ENCODE measurements at regions of chr3 and their contacts with region 1.

Region 1: DNA sequence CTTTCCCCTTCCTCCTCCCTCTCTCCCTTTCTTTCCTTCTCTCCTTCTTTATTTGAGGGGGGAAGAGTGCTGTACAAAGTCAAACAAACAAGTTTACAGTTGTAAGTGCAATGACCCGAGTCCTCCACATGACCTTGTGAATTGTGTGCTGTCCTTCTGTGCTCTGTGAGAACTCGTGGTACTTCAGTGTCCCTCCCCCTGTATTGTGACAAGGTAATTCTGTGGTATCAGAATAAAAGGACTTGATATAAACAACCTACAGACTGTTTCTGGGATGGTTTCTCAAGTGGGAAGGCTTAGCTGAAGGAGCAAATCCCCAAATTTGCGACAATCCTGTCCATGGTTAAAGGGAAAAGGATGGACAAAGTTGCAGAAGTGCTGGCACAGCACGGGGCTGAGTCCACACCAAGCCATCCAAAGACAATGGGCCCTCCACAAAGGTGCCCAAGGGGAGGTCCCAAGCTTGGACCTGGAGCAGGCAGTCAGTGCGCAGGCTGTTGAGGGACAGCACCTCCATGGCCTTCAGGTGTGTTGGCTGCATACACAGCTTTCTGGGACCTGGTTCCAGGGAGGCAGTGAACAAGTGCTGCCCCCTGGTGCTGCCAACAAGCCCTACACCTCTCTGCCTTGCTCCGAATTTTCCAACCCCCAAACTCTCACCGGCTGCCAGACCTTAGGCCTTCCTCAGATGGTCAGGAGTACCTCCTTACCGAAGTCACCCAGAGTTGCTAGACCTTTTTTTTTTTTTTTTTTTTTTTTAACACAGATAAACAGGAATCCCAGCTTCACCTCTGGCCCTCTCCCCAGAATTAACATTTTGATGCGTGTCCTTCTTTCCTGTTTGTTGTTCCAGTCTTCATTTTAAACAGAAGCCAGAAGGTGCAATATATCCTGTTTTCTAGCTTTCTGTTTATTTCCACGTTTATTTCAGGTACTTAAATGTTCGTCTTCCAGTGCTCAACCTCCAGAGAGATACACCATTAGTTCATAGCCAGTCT is 2.6 kb upstream of the APEH start:
- DNase-seq: peak; percentile 52
- H3K4me3 ChIP-seq: no peak overlapping the region
- H3K27ac ChIP-seq: no peak overlapping the region
- H3K4me1 ChIP-seq: peaks cover 33% of the 10 kb centered on the region
- H3K27me3 ChIP-seq: no peaks in the 10 kb centered on the region
- CTCF ChIP-seq: peak; percentile 83

Region 2: GRCh38 chr3:49500732-49501609 is 170.6 kb before region 1 on chr3:
- intact Hi-C with region 1: no loop called
- DNase-seq: peak; percentile 40
- H3K4me3 ChIP-seq: peak overlapping the region; percentile 23
- H3K27ac ChIP-seq: peak overlapping the region; percentile 86
- H3K4me1 ChIP-seq: peaks cover 48% of the 10 kb centered on the region
- H3K27me3 ChIP-seq: no peaks in the 10 kb centered on the region
- CTCF ChIP-seq: no peak

Region 3: DNA sequence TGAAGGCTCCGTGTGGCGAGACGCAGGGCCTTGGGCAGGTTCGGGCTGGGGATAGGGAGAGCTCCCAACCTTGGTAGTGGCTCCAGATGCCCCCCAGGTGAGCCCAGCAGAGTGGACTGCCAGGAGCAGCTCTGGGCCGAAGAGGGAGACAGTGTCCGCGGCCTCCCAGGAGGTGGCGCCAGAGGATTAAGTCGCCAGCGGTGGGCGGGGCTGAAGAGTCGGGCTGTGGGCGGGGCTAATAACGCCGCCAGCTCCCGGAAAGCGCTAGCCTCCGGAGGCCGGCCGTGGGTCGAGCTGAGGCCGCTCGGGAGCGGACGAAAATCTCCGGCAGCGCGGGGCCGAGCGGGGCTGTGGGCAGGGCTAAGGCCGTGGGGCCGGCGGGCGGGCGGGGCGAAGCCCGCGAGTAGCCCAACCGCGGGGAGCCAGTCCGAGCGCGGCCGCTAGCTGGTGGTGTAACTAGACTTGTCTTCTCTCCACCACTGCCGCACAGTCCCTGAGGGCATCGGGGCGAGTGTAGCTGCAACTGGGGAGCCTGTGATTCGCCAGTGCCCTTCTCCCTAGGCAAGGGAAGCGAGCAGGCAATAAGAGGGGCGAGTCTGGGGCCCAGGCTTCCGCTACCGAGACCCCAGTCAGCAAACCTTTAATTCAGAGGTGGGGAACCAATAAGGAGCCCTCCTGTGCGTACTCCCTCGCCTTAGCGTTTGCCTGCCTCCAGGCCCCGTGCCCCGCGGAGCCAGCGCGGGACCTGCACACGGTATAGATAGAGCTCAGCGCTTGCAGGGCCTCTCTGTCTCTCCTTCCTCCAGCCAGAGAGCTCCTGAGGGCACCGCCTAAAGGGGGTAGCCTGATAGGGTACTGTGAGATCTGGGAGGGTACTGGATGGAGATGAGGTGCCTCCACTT is 131.7 kb before region 1 on chr3:
- intact Hi-C with region 1: loop called (anchors 2 kb)
- DNase-seq: peak; percentile 93
- H3K4me3 ChIP-seq: peak overlapping the region; percentile 76
- H3K27ac ChIP-seq: peak overlapping the region; percentile 89
- H3K4me1 ChIP-seq: peaks cover 12% of the 10 kb centered on the region
- H3K27me3 ChIP-seq: peaks cover 15% of the 10 kb centered on the region
- CTCF ChIP-seq: peak; percentile 95

Region 4: GRCh38 chr3:49582177-49582576 is 89.4 kb before region 1 on chr3:
- intact Hi-C with region 1: no loop called
- DNase-seq: no peak
- H3K4me3 ChIP-seq: no peak overlapping the region
- H3K27ac ChIP-seq: no peak overlapping the region
- H3K4me1 ChIP-seq: no peaks in the 10 kb centered on the region
- H3K27me3 ChIP-seq: no peaks in the 10 kb centered on the region
- CTCF ChIP-seq: no peak

Region 5: GRCh38 chr3:49785565-49786240 is 114.1 kb after region 1 on chr3:
- intact Hi-C with region 1: no loop called
- DNase-seq: no peak
- H3K4me3 ChIP-seq: peak overlapping the region; percentile 96
- H3K27ac ChIP-seq: peak overlapping the region; percentile 96
- H3K4me1 ChIP-seq: peaks cover 63% of the 10 kb centered on the region
- H3K27me3 ChIP-seq: no peaks in the 10 kb centered on the region
- CTCF ChIP-seq: no peak

Region 6: DNA sequence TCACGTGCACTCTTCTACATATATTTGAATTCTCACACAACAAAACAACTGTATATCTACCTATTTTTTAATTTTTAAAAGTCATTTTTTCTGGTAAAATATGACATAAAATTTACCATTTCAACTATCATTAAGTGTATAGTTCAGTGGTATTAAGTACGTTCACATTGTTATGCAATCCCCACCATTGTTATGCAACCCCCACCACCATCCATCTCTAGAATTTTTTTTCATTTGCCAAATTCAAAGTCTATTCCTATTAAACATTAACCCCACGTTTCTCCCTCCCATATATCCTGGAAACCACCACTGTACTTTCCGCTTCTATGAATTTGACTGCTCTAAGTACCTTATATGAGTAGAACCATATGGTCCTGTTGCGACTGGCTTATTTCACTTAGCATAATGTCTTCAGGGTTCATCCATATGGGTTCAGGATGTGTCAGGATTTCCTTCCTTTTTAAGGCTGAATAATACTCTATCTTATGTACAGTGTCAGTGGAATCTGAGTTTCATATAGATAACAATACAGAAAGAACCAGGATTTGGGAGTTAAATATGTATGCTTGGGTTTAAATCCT is 1282.3 kb after region 1 on chr3:
- intact Hi-C with region 1: no loop called
- DNase-seq: no peak
- H3K4me3 ChIP-seq: no peak overlapping the region
- H3K27ac ChIP-seq: no peak overlapping the region
- H3K4me1 ChIP-seq: no peaks in the 10 kb centered on the region
- H3K27me3 ChIP-seq: no peaks in the 10 kb centered on the region
- CTCF ChIP-seq: no peak

Measured in left ventricle myocardium inferior (tissue), 1 donor.